ENCODE measurements at regions of chr1 and their contacts with region 1.

Region 1: GRCh38 chr1:45084562-45084961 is 72.5 kb downstream of the UROD start:
- DNase-seq: no peak
- H3K4me3 ChIP-seq: no peak overlapping the region
- H3K27ac ChIP-seq: no peak overlapping the region
- H3K4me1 ChIP-seq: no peaks in the 10 kb centered on the region
- H3K27me3 ChIP-seq: no peaks in the 10 kb centered on the region
- CTCF ChIP-seq: no peak

Region 2: GRCh38 chr1:45243476-45244343 is 159.1 kb after region 1 on chr1:
- CTCF ChIA-PET with region 1: no interaction called
- POLR2A ChIA-PET with region 1: interaction called, 14 read pairs
- intact Hi-C with region 1: no loop called
- DNase-seq: no peak
- H3K4me3 ChIP-seq: no peak overlapping the region
- H3K27ac ChIP-seq: no peak overlapping the region
- H3K4me1 ChIP-seq: no peaks in the 10 kb centered on the region
- H3K27me3 ChIP-seq: no peaks in the 10 kb centered on the region
- CTCF ChIP-seq: no peak

Measured in A673 (cell line).